ENCODE measurements at regions of chr15 and their contacts with region 1.

Region 1: DNA sequence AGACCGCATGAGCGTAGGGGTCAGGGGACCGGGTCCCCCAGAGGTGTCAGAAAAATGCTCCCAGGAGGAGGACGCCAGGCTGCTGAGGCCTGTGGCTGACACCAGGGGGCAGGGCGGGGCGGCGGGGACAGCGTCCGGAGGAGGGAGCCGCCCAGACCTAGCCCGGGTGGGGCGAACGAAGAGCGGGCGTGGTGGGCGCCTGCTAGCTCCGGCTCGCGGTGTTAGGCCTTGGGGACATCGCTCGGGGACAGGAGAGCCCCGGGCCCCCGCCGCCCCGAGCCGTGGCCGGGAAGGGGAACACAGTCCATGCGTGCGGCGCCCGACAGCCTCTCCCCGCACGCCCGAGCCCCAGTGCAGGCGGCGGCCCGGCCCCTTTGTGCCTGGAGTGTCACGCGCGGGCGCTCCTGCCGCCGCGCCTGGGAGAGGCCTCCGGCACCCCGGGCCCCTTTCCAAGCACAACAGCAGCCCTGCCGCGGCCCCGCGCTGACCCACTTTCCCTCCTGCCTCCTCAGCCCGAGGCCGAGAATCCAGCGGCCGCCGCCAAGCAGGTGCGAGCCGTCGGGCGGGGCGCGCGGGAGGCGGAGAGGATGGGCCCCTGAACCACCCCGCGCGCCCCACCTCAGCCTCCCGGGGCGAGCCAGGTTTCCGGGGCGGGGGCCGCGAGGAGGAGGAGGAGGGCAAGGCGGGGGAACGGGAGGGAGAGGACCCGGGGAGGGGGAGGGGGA is 111.0 kb upstream of the KLF13 start:
- DNase-seq: peak; percentile 85 to 91
- ATAC-seq: peak; percentile 77 to 89
- H3K4me3 ChIP-seq: peak overlapping the region; percentile 69
- H3K27ac ChIP-seq: peak overlapping the region; percentile 96 to 97
- H3K4me1 ChIP-seq: peaks cover 21% of the 10 kb centered on the region
- CTCF ChIP-seq: peak; percentile 83
- EP300 ChIP-seq: no peak
- POLR2A ChIP-seq: peak; percentile 22; the same call in 1 of the 2 replicates
- RAD21 ChIP-seq: peak; percentile 72 to 88

Region 2: DNA sequence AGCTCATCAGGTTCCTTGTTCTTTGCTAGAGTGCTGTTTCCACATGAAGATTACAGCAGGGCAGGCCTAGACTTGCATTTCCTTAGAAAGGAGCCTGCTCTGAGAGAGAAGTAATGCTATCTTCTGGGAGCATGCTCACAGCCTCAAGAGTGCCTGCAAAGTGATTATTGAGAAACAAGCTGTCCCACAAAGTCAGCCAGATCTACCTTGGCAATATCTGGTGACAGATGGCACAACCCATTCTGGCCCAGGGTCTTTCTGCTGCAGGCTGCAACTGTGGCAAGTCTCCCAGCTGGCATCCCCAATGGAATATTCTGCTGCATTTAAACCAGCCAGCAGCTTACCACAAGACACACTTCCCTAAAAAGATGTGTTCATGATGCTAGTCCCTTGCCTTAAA is 253.6 kb before region 1 on chr15:
- CTCF ChIA-PET with region 1: no interaction called
- POLR2A ChIA-PET with region 1: no interaction called
- DNase-seq: no peak
- ATAC-seq: no peak
- H3K4me3 ChIP-seq: no peak overlapping the region
- H3K27ac ChIP-seq: no peak overlapping the region
- H3K4me1 ChIP-seq: no peaks in the 10 kb centered on the region
- CTCF ChIP-seq: no peak
- EP300 ChIP-seq: no peak
- POLR2A ChIP-seq: no peak
- RAD21 ChIP-seq: no peak

Region 3: DNA sequence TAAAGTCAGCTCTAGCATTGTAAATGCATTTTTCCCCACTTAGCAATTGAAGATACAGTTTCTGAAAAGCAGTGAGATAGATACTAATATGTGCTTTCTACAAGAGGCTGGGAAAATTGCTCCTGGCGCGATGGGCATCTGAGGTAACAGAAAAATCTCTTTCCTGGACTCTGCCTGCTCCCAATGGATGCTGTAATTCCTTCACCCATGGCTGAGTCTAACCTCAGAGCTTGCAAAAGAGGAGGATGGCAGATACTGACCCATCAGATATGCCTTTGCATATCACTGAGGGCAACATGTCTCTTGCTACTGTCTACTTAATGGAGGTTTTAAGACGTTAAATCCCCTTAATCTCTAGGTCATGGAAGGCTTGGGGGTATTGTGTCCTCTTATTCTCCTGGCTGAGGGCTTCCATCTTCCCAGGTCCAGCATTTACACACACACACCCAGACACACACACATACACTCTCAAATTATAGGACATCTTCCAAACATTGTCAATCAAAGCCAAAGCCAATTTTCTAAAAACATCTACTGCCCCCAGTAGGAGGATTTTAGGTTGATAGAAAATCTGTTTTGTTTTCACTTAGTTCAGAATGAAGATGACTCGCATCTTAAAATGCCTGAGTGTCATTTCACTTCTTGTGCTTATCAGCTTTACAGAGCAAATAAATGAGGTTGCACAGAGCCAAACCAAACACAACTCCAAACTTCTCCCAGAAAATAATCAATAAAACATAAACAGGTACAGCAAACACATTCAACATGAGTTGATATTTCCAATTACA is 116.5 kb before region 1 on chr15:
- CTCF ChIA-PET with region 1: no interaction called
- POLR2A ChIA-PET with region 1: no interaction called
- DNase-seq: no peak
- ATAC-seq: peak in 1 of 2 experiments; percentile 13; a peak in 3 of 6 replicates
- H3K4me3 ChIP-seq: no peak overlapping the region
- H3K27ac ChIP-seq: no peak overlapping the region
- H3K4me1 ChIP-seq: peaks cover 15% of the 10 kb centered on the region; the same call in 2 of the 3 replicates
- CTCF ChIP-seq: 0 out of 3 replicates have a peak, but pooled peaks have one; percentile 13
- EP300 ChIP-seq: no peak
- POLR2A ChIP-seq: no peak
- RAD21 ChIP-seq: peak; percentile 24 to 33; a peak in 4 of 5 replicates

Region 4: GRCh38 chr15:31200735-31201151 is 14.9 kb before region 1 on chr15:
- CTCF ChIA-PET with region 1: interaction called, 22 read pairs
- POLR2A ChIA-PET with region 1: no interaction called
- DNase-seq: peak; percentile 66 to 75
- ATAC-seq: peak; percentile 77 to 89
- H3K4me3 ChIP-seq: no peak overlapping the region
- H3K27ac ChIP-seq: peak overlapping the region in 1 of 2 experiments; percentile 30; a peak in 2 of 6 replicates
- H3K4me1 ChIP-seq: no peaks in the 10 kb centered on the region
- CTCF ChIP-seq: peak; percentile 62
- EP300 ChIP-seq: no peak
- POLR2A ChIP-seq: no peak
- RAD21 ChIP-seq: peak; percentile 82 to 86

Region 5: GRCh38 chr15:31236184-31237042 is 20.8 kb after region 1 on chr15:
- CTCF ChIA-PET with region 1: interaction called, 12 read pairs
- POLR2A ChIA-PET with region 1: interaction called, 6 read pairs
- DNase-seq: peak; percentile 85 to 93
- ATAC-seq: peak; percentile 94 to 95
- H3K4me3 ChIP-seq: no peak overlapping the region
- H3K27ac ChIP-seq: peak overlapping the region; percentile 71 to 89
- H3K4me1 ChIP-seq: peaks cover 23% of the 10 kb centered on the region
- CTCF ChIP-seq: no peak
- EP300 ChIP-seq: peak in 1 of 2 experiments; percentile 33; a peak in 2 of 5 replicates
- POLR2A ChIP-seq: no peak
- RAD21 ChIP-seq: peak in 1 of 2 experiments; percentile 41; a peak in 2 of 5 replicates

Region 6: DNA sequence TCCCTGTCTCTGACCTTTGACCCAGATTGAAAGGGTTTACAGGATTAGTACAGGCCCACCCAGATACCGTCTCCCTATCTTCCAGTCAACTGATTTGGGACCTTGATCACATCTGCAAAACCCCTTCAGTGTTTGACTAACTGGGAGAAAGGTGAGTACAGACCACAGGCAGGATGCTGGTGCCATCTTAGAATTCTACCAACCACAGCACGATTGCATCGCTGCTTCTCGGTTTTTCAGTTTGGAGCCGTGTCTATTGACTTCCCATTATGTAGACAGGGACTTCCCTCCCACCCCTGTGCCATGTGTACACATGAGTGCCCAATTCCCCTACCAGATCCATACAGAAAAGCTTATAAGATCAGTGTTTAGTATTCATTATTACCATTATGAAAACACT is 104.4 kb after region 1 on chr15:
- CTCF ChIA-PET with region 1: interaction called, 18 read pairs
- POLR2A ChIA-PET with region 1: no interaction called
- DNase-seq: no peak
- ATAC-seq: no peak
- H3K4me3 ChIP-seq: no peak overlapping the region
- H3K27ac ChIP-seq: no peak overlapping the region
- H3K4me1 ChIP-seq: peaks cover 6% of the 10 kb centered on the region
- CTCF ChIP-seq: no peak
- EP300 ChIP-seq: no peak
- POLR2A ChIP-seq: no peak
- RAD21 ChIP-seq: no peak

Region 7: DNA sequence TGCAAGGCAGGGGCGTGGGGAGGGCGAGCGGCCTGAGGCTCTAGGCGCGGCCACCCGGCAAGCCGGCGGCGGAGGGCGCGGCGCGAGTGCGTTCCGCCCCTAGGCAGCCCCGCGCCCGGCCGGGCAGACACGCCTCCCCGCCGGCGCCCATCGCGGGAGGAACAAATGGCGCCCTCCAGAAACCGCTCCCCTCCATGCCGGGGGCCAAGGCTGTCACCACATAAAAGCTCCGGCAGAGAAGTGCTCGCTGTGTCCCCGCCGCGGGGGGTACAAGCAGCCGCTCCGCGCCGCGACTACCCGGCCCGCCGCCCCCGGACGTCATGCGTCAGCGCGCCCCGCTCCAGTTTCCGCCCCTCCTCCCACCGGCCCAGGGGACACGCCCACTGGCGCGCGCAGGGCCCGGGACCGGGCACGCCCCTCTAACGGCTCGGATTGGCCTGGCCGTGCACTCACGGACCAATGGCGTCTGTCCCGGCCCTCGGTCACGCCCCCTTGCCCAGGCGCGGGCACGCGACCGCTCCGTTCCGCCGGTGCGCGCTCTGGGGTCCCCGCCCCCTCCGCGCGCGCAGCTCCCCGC is 110.6 kb after region 1 on chr15:
- CTCF ChIA-PET with region 1: interaction called, 18 read pairs
- POLR2A ChIA-PET with region 1: interaction called, 41 read pairs
- DNase-seq: peak; percentile 98 to 99
- ATAC-seq: peak; percentile 63 to 87
- H3K4me3 ChIP-seq: peak overlapping the region; percentile 71
- H3K27ac ChIP-seq: peak overlapping the region; percentile 94
- H3K4me1 ChIP-seq: peaks cover 24% of the 10 kb centered on the region
- CTCF ChIP-seq: no peak
- EP300 ChIP-seq: no peak
- POLR2A ChIP-seq: no peak; the same call in none of the 2 replicates
- RAD21 ChIP-seq: no peak

Region 8: GRCh38 chr15:31440754-31441311 is 225.2 kb after region 1 on chr15:
- CTCF ChIA-PET with region 1: interaction called, 53 read pairs
- POLR2A ChIA-PET with region 1: no interaction called
- DNase-seq: no peak
- ATAC-seq: peak; percentile 30 to 67
- H3K4me3 ChIP-seq: peak overlapping the region; percentile 62
- H3K27ac ChIP-seq: peak overlapping the region; percentile 91 to 93
- H3K4me1 ChIP-seq: peaks cover 37% of the 10 kb centered on the region
- CTCF ChIP-seq: no peak
- EP300 ChIP-seq: no peak
- POLR2A ChIP-seq: peak; percentile 56
- RAD21 ChIP-seq: no peak

Measured in A549 (cell line).